Activated CD8-positive, alpha-beta T cell treated with anti-CD3 and anti-CD28 coated beads for 36 hours (primary cell): ENCODE measurements at regions of chr10 and their contacts with region 1.

Region 1: GRCh38 chr10:67697724-67698131 is 1.7 kb upstream of the CTNNA3 start:
- DNase-seq: peak; percentile 9
- ATAC-seq: peak; percentile 83
- H3K4me3 Mint-ChIP-seq: no peak overlapping the region
- H3K27ac Mint-ChIP-seq: no peak overlapping the region
- H3K4me1 Mint-ChIP-seq: no peaks in the 10 kb centered on the region
- H3K27me3 Mint-ChIP-seq: peaks cover 28% of the 10 kb centered on the region
- CTCF ChIP-seq: peak; percentile 75

Region 2: DNA sequence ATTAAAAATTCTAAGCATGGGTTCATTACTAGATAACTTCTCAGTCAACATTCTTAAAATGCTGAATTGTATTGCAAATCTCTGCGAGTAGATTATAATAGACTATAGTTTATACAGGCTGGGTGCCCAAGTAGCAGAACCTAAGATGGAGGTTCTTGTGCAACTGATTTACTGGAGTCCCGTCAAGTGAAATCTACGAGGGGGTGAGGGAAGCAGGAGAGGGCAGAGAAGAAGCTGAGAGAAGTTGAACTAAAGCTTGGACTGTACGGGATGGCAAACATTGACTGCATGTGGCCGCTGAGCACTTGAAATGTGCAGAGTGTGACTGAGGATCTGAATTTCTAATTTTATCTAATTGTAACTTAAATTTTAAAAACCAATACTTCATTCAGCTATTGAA is 126.2 kb before region 1 on chr10:
- CTCF ChIA-PET with region 1: no interaction called
- POLR2A ChIA-PET with region 1: no interaction called
- intact Hi-C with region 1: no loop called
- DNase-seq: no peak
- ATAC-seq: no peak
- H3K4me3 Mint-ChIP-seq: no peak overlapping the region
- H3K27ac Mint-ChIP-seq: no peak overlapping the region
- H3K4me1 Mint-ChIP-seq: no peaks in the 10 kb centered on the region
- H3K27me3 Mint-ChIP-seq: no peaks in the 10 kb centered on the region
- CTCF ChIP-seq: no peak

Region 3: DNA sequence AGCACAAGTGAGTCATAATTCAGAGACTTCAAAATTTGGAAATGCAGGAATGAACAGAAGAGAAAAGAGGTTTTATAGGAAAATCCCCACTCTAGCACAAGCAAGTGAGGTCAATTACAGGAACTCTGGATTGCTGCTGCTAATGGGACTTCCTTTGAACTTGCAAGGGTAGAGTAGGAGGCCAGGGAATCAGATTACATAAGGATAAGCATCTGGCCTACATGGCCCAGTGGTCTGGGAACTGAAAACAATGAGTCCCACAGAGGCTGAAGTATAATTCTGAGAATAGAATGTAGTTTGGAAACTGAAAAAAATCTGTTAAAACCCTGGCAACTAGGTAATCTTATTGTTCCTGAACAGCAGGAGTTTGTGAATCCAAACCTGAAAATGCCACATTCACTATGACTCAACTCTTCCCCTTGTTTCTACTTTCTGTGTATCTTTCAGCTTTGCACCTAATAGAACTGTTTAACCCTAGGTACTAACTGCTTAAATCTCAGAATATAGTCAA is 68.2 kb before region 1 on chr10:
- CTCF ChIA-PET with region 1: no interaction called
- POLR2A ChIA-PET with region 1: no interaction called
- intact Hi-C with region 1: no loop called
- DNase-seq: no peak
- ATAC-seq: no peak
- H3K4me3 Mint-ChIP-seq: no peak overlapping the region
- H3K27ac Mint-ChIP-seq: no peak overlapping the region
- H3K4me1 Mint-ChIP-seq: no peaks in the 10 kb centered on the region
- H3K27me3 Mint-ChIP-seq: peaks cover 13% of the 10 kb centered on the region
- CTCF ChIP-seq: no peak

Region 4: DNA sequence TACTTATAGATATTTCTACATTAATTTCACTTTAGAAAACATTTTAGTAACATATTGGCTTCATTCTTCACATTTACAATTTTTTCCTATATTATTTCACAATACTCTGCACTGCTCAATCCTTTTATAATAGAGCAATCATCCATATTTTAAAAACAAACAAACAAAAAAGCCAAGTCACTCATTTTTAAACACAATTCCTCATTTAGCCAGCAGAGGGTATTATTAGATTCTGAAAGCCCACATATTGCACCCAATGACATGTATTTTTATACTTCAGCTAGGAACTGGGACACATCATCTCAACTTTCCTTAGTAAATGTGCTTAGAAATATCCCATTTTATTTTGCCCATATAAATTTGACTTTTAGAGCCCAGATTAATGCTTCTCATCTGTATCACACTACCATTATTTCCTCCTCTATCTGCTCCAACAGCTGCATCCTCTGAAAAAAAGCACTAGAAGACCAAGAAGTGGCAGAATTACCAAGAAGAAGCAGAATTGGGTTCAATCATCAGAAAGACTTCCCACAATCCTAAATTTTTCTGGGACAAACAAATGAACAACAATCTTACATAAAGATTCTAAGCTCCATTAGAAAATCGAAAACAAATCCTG is 31.2 kb before region 1 on chr10:
- CTCF ChIA-PET with region 1: interaction called, 14 read pairs
- POLR2A ChIA-PET with region 1: no interaction called
- intact Hi-C with region 1: no loop called
- DNase-seq: no peak
- ATAC-seq: no peak
- H3K4me3 Mint-ChIP-seq: no peak overlapping the region
- H3K27ac Mint-ChIP-seq: no peak overlapping the region
- H3K4me1 Mint-ChIP-seq: no peaks in the 10 kb centered on the region
- H3K27me3 Mint-ChIP-seq: peaks cover 11% of the 10 kb centered on the region
- CTCF ChIP-seq: peak; percentile 66

Region 5: DNA sequence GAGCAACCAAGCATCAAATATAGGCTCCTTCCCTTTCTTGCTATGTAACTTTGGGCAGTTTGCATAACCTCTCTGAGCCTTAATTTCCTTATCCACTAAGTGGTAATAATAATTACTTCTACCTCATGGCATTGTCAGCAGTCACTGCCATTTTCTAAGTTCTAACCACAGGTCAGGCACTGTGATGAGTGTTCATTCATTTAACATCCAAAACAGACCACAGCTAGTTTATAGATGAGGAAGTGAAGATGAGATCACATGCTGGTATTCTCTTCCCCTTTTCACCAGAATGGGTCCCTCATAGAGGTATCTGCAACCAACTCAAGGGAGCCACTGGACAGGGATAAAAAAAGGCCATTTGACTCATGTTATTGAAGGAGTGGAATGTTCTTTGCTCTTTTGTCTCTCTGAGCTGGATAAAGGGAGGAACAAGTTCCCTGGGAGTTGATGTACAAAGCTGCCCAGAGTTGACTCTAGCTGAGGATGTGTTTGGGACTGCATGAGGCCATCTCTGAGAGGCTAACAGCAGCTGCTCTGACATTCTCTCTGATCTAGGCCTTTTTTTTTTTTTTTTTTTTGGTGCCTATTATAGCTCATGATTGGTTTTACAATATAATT is 75.3 kb after region 1 on chr10:
- CTCF ChIA-PET with region 1: interaction called, 225 read pairs
- POLR2A ChIA-PET with region 1: no interaction called
- intact Hi-C with region 1: no loop called
- DNase-seq: no peak
- ATAC-seq: peak; percentile 91
- H3K4me3 Mint-ChIP-seq: no peak overlapping the region
- H3K27ac Mint-ChIP-seq: no peak overlapping the region
- H3K4me1 Mint-ChIP-seq: peaks cover 12% of the 10 kb centered on the region
- H3K27me3 Mint-ChIP-seq: no peaks in the 10 kb centered on the region
- CTCF ChIP-seq: no peak

Region 6: GRCh38 chr10:68156373-68157185 is 458.9 kb after region 1 on chr10:
- CTCF ChIA-PET with region 1: interaction called, 11 read pairs
- POLR2A ChIA-PET with region 1: no interaction called
- intact Hi-C with region 1: no loop called
- DNase-seq: peak; percentile 80
- ATAC-seq: no peak
- H3K4me3 Mint-ChIP-seq: no peak overlapping the region
- H3K27ac Mint-ChIP-seq: no peak overlapping the region
- H3K4me1 Mint-ChIP-seq: no peaks in the 10 kb centered on the region
- H3K27me3 Mint-ChIP-seq: no peaks in the 10 kb centered on the region
- CTCF ChIP-seq: peak; percentile 95